Activated T-helper 2 cell treated with anti-CD3 and anti-CD28 coated beads, Interferon-gamma antibody, Interleukin-2, Interleukin-4, amounts not matched to agents 10 μg/mL and 5 μg/mL and 100 μg/mL, durations not matched to agents 14 hours and 24 hours and 36 hours (primary cell): ENCODE measurements at regions of chr3 and their contacts with region 1.

Region 1: GRCh38 chr3:39383045-39383880 is at the start of gene SLC25A38:
- DNase-seq: peak; percentile 79
- H3K4me3 Mint-ChIP-seq: peak within 1 kb of the TSS; percentile 98
- H3K27ac Mint-ChIP-seq: peak within 1 kb of the TSS; percentile 99
- H3K4me1 Mint-ChIP-seq: peaks cover 34% of the 10 kb centered on the region
- H3K27me3 Mint-ChIP-seq: no peaks in the 10 kb centered on the region
- total RNA-seq, gene SLC25A38: 35.5 and 37.5 TPM in 2 replicates

Region 2: DNA sequence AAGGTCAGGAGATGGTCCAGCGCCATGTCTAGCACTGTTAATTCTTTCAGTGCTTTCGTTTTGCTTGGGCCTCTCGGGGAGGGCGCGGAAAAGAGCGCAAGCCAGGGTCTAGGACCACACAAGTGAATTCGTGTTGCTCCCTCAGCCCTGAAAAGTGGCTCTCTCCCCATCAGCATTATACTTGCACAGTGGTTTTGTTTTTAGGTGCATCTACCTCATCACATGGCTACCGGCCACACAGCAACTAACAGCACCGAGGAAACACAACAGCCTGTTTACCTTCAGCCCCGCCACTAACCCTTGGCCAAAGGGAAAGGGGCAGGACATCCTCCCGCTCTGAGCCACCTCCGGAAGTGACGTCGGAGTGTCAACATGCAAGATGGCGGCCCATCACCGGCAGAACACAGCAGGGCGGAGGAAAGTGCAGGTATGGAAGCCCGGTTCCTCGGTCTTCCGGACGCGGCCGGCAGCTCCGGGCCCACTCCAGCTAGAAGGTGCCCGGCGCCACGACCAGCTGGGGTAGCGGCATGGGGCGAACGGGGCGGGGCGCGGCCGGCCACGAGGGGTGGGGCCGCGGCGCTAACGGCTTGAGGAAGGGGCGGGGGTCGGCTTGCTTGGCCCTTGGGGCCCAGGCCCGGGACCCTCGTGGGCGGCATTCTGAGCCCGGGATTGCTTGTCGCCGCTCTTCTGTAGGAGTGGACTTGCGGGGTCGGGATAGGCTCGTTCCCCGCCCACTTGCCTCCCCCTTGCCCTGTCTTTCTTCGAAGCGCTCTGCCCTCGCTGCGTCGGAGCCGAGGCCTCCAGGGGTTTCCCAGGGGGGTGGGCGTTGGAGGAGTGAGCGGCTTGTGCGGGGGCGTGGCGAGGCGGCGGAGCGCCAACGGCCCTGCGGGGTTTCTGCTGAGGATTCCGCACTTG is 331.4 kb before region 1 on chr3 and contains the starts of genes SCN11A and WDR48:
- intact Hi-C with region 1: loop called (anchors 10 kb)
- DNase-seq: peak; percentile 90
- H3K4me3 Mint-ChIP-seq: peak within 1 kb of the TSS; percentile 91
- H3K27ac Mint-ChIP-seq: peak within 1 kb of the TSS; percentile 95
- H3K4me1 Mint-ChIP-seq: peaks cover 19% of the 10 kb centered on the region
- H3K27me3 Mint-ChIP-seq: peaks cover 2% of the 10 kb centered on the region
- total RNA-seq, gene SCN11A: 0.02 TPM in 2 replicates
- total RNA-seq, gene WDR48: 35.1 and 38.6 TPM in 2 replicates

Region 3: DNA sequence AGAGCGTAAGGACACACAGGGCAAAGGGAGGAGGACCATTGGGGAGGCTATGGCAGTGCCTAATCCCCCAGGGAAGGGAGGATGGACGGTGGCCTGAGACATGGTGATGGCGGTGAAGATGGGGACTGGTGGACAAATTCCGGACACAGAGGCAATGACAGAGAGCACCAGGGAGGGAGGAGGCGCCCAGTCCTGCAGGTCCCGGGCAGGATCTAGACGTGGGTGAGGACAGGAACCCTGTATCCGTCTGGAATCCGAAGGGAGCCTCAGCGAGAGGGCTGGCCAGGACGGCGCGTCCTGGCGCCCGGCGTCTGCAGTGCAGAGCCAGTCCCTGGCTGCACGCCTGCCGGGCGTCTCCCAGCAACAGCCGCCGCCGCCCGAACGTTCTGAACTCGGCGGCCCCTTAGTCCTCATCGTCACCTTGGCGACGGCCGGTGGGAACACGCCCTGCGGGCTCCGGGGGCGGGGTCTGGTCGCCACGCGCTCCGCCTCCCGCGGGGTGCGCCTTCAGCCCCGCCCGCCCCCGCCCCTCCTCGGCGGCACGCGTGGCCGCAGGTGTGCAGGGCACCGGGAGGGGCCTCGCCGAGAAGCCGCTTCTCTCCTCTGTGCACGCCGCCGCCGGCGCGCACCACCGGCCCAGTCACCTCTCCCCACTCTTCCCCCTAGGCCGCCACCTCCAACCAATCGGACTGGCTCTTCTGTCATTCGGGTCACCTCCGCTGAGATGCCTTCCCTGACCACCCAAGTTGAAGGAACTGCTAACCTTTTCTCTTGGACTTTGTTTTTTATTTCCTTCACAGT is 202.5 kb before region 1 on chr3:
- intact Hi-C with region 1: loop called (anchors 5 kb)
- DNase-seq: peak; percentile 87
- H3K4me3 Mint-ChIP-seq: peak overlapping the region; percentile 74
- H3K27ac Mint-ChIP-seq: peak overlapping the region; percentile 59
- H3K4me1 Mint-ChIP-seq: peaks cover 45% of the 10 kb centered on the region
- H3K27me3 Mint-ChIP-seq: no peaks in the 10 kb centered on the region

Region 4: DNA sequence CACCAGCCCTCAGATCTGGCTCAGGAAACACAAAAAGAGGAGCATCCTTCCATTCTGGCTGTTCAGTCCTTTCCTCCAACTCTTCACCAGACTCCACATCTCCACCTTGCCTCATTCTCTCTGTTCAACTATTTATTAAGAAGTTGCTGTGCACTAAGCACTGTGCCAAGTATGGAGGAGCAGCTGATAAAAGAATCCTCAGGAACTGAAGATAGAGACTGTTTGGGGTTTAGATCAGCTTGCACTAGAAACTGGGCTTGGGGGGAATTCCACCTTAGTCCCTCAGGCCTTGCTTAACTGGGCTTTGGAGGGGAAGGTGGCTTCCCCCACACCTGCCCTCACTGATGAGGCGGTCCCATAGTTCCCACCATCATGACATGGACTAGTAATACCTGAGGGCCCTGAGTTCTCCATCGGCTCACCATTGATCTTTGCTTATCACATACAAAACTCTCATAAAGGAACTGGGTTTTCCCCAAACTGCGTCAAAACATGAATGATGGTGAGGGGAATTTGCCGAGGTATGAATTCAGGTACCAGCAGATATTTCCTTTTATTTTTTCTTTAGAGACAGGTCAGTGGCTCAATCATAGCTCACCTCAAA is 55.4 kb before region 1 on chr3:
- intact Hi-C with region 1: loop called (anchors 2 kb)
- DNase-seq: no peak
- H3K4me3 Mint-ChIP-seq: peak overlapping the region; percentile 35
- H3K27ac Mint-ChIP-seq: peak overlapping the region; percentile 58
- H3K4me1 Mint-ChIP-seq: peaks cover 65% of the 10 kb centered on the region
- H3K27me3 Mint-ChIP-seq: no peaks in the 10 kb centered on the region

Region 5: GRCh38 chr3:39361252-39361927 is 21.9 kb before region 1 on chr3:
- intact Hi-C with region 1: loop called (anchors 1 kb)
- DNase-seq: peak; percentile 75
- H3K4me3 Mint-ChIP-seq: peak overlapping the region; percentile 77
- H3K27ac Mint-ChIP-seq: peak overlapping the region; percentile 88
- H3K4me1 Mint-ChIP-seq: peaks cover 73% of the 10 kb centered on the region
- H3K27me3 Mint-ChIP-seq: no peaks in the 10 kb centered on the region

Region 6: DNA sequence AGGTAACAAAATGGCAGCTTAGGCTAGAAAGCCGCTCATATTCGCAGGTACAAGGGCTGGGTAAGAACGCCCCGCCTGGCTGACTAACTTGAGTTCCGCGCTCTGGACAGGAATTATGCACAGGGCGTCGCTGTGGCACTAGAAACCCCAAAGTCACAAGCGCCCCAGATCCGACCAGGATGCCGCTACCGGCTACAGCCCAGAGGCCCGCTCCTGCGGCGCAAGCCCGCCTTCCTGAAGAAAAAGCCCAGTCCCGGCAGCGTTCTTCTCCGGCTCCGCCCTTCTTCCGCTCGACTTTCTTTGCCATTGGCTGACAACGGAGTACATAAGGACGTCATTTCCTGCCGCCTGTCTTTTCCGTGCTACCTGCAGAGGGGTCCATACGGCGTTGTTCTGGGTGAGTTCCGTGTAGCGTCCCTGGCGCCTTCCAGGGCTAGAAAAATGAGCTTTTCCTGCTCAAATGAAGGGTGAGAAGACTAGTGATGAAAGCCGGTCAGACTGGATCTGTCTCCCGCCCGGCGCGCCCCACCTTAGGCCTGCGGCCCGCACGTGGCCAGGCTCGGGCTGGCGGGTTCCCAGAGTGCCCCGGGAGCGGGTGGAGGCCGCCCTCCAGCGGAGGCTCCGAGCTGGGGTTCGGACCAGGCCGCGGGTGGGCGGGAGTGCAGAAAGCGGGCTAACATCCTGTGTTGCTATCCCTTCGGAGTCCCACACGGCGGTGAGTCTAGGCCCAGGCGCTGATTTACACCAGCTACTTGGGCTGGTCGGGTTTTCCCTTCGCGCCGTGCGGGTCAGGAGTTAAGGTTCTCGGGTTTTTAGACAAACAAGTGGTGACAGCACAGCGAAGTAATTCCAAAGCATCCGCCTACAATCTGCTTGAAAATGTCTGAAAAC is 23.4 kb after region 1 on chr3 and contains the start of gene RPSA:
- intact Hi-C with region 1: loop called (anchors 1 kb)
- DNase-seq: peak; percentile 98
- H3K4me3 Mint-ChIP-seq: peak within 1 kb of the TSS; percentile 94
- H3K27ac Mint-ChIP-seq: peak within 1 kb of the TSS; percentile 98
- H3K4me1 Mint-ChIP-seq: peaks cover 40% of the 10 kb centered on the region
- H3K27me3 Mint-ChIP-seq: no peaks in the 10 kb centered on the region
- total RNA-seq, gene RPSA: 2,053 and 2,074 TPM in 2 replicates